WTC11 (cell line): ENCODE measurements at regions of chr9 and their contacts with region 1.

Region 1: DNA sequence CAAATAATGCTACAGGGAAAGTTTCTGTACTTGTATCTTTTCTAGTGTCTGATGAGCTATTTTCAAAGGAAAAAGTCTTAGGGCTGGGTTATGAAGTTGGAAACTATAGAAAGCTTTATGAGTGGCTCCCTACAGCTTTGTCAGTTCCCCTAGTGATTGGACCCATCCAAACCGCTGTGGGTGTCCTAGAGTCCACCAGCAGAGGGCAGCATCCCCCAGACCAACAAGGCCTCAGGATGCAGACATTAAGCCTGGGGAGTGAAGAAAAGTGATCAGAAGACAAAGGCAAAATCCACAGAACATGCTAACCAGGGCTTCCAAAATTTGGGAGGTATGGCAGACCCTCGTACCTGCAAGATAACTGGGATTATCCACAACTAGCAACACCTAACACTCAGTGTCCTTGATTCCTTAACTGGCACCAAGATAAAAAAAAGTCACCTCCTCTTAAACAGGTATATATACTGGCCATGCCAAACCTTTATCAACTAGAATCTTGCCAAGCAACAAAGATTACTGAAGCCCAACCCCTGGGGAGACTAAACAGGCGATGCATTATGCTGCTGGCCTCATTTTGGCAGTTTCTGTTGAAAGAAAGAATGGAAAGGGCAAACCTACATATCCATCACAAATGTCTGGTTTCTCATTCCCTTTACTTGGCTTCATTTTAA is 110.4 kb upstream of the NR5A1 start:
- DNase-seq: peak; percentile 90
- ATAC-seq: peak; percentile 90
- H3K4me3 Mint-ChIP-seq: no peak overlapping the region
- H3K27ac Mint-ChIP-seq: peak overlapping the region; percentile 94
- H3K4me1 Mint-ChIP-seq: peaks cover 56% of the 10 kb centered on the region
- H3K27me3 Mint-ChIP-seq: no peaks in the 10 kb centered on the region
- CTCF ChIP-seq: peak; percentile 89

Region 2: GRCh38 chr9:124522121-124523098 is 95.2 kb before region 1 on chr9:
- CTCF ChIA-PET with region 1: interaction called, 11 read pairs
- POLR2A ChIA-PET with region 1: no interaction called
- DNase-seq: peak; percentile 75
- ATAC-seq: peak; percentile 97
- H3K4me3 Mint-ChIP-seq: no peak overlapping the region
- H3K27ac Mint-ChIP-seq: peak overlapping the region; percentile 80
- H3K4me1 Mint-ChIP-seq: 0 out of 2 replicates have a peak, but pooled peaks cover 3% of the 10 kb centered on the region
- H3K27me3 Mint-ChIP-seq: no peaks in the 10 kb centered on the region
- CTCF ChIP-seq: no peak

Region 3: DNA sequence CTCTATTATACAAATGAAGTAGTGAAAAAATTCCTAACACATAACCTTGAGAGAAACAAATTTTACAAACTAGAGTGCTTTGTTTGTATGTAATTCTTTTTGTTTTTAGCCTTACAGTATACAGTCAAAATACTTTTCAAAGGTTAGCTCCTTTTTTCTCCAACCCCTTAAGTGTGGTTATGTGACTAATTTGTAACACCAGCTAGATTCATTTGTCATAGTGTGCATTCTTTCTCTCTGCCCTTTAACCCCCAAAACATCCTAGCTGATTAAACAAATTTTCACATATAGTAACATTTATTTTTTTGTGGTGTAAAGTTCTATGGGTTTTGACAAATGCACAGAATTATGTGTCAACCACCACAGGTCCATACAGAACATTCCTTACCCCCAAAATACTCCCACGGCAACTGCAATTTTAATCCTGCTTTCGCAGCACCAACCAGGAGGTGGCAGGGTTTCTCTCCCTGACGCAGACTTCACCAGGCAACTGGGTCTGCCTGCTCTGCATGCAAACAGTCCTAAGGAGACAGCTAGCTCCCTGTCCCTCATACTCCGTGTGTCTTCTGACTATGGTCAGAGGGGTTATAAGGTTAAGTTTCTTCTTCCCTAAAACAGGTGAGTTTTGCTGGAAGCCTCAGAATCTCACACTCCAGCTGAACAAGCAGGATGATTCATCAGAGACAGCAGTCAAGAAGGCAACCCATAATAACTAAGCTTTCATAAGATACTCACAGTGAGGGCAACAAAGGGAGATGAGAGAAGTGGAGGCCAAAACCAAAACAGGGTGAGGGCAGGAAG is 65.9 kb before region 1 on chr9:
- CTCF ChIA-PET with region 1: interaction called, 95 read pairs
- POLR2A ChIA-PET with region 1: interaction called, 3 read pairs
- DNase-seq: peak; percentile 77
- ATAC-seq: peak; percentile 98
- H3K4me3 Mint-ChIP-seq: no peak overlapping the region
- H3K27ac Mint-ChIP-seq: no peak overlapping the region
- H3K4me1 Mint-ChIP-seq: peaks cover 13% of the 10 kb centered on the region
- H3K27me3 Mint-ChIP-seq: no peaks in the 10 kb centered on the region
- CTCF ChIP-seq: peak; percentile 23; the same call in 1 of the 2 replicates

Region 4: GRCh38 chr9:124574534-124575341 is 42.9 kb before region 1 on chr9:
- CTCF ChIA-PET with region 1: interaction called, 15 read pairs
- POLR2A ChIA-PET with region 1: no interaction called
- DNase-seq: no peak
- ATAC-seq: no peak
- H3K4me3 Mint-ChIP-seq: no peak overlapping the region
- H3K27ac Mint-ChIP-seq: peak overlapping the region; percentile 48; the same call in 1 of the 2 replicates
- H3K4me1 Mint-ChIP-seq: peaks cover 54% of the 10 kb centered on the region
- H3K27me3 Mint-ChIP-seq: no peaks in the 10 kb centered on the region
- CTCF ChIP-seq: no peak

Region 5: GRCh38 chr9:124635285-124635684 is 17.7 kb after region 1 on chr9:
- CTCF ChIA-PET with region 1: interaction called, 25 read pairs
- POLR2A ChIA-PET with region 1: no interaction called
- DNase-seq: no peak
- ATAC-seq: no peak
- H3K4me3 Mint-ChIP-seq: no peak overlapping the region
- H3K27ac Mint-ChIP-seq: 0 out of 2 replicates have a peak overlapping the region, but pooled peaks have one; percentile 74
- H3K4me1 Mint-ChIP-seq: peaks cover 17% of the 10 kb centered on the region
- H3K27me3 Mint-ChIP-seq: no peaks in the 10 kb centered on the region
- CTCF ChIP-seq: no peak

Region 6: DNA sequence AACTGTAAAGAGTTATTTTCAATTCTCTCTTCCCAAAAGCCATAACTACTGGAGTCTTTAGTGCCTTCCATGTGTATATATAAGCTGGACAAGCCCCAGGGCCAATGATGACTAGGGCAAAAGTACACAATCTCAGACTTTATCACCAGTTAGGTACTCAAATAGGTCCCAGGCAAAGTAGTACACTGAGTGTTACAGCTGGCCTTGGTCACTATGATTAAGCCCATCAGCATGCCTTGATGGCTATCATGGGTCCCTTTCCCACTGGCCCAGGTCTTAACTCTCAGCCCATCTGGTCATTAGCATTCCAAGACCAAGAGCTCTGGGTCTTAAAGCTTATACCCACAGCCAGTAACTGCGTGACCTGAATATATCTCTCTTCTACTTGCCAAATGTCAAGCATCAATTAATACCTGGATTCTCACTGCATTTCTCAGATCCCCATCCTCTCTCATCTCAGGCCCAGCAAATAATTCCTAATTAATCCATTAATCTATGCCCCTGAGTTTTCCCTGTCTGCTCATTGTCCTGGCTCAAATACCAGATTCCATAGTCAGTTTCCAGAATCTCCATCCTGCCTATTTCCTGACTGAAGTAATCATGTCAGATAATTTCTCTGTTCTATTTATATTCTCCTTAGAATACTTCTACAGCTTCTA is 91.2 kb after region 1 on chr9:
- CTCF ChIA-PET with region 1: interaction called, 81 read pairs
- POLR2A ChIA-PET with region 1: no interaction called
- DNase-seq: no peak
- ATAC-seq: no peak
- H3K4me3 Mint-ChIP-seq: no peak overlapping the region
- H3K27ac Mint-ChIP-seq: peak overlapping the region; percentile 91; the same call in 1 of the 2 replicates
- H3K4me1 Mint-ChIP-seq: peaks cover 50% of the 10 kb centered on the region
- H3K27me3 Mint-ChIP-seq: no peaks in the 10 kb centered on the region
- CTCF ChIP-seq: no peak

Region 7: GRCh38 chr9:124771021-124771866 is 153.6 kb after region 1 on chr9 and contains the start of gene NR6A1:
- CTCF ChIA-PET with region 1: interaction called, 24 read pairs
- POLR2A ChIA-PET with region 1: no interaction called
- DNase-seq: peak; percentile 98
- ATAC-seq: peak; percentile 81
- H3K4me3 Mint-ChIP-seq: peak within 1 kb of the TSS; percentile 85
- H3K27ac Mint-ChIP-seq: peak within 1 kb of the TSS; percentile 98
- H3K4me1 Mint-ChIP-seq: peaks cover 42% of the 10 kb centered on the region
- H3K27me3 Mint-ChIP-seq: peaks cover 11% of the 10 kb centered on the region
- CTCF ChIP-seq: no peak
- total RNA-seq, gene NR6A1: 164 to 222 TPM (median 218 TPM) in 3 replicates